ENCODE measurements at regions of chr20 and their contacts with region 1.

Region 1: DNA sequence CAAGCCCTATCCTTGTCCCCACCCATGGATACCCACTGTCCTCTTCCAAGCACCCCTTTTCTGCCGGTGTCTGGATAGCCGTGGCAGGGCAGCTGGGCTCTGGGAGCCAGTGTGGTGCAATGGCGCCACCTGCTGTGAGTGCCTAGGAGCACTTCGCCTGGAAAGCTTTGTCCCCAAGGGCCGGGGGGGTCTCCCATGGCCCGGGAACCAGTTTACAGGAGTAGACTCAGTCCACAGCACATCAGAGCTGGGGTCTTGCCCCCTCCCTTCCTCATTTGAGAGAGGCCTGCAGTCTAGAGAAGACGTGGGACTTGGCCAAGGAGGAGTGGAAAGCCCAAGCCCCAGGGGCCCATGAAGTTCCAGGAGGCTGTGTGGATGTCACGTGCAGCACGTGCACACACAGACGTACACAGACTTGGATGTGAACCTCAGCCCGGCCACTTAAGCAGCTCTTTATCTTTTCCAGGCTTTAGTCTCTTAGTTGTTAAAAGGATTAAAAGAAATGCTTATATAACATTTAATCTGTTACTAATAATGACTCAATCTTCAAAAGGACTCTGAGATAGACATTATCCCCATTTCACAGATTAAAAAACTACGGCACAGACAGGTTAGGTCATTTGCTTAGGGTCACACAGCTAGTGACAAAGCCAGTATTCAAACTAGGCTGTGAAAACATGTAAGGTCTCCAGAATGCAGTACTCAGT is 40.9 kb upstream of the CDH22 start:
- DNase-seq: peak; percentile 66 to 79
- ATAC-seq: peak; percentile 62 to 85 (median 80)
- H3K4me3 ChIP-seq: no peak overlapping the region
- H3K27ac ChIP-seq: no peak overlapping the region
- H3K4me1 ChIP-seq: no peaks in the 10 kb centered on the region
- H3K27me3 ChIP-seq: no peaks in the 10 kb centered on the region
- CTCF ChIP-seq: peak; percentile 85

Region 2: GRCh38 chr20:46273717-46274116 is 75.5 kb before region 1 on chr20:
- intact Hi-C with region 1: no loop called
- DNase-seq: no peak
- ATAC-seq: no peak
- H3K4me3 ChIP-seq: no peak overlapping the region
- H3K27ac ChIP-seq: no peak overlapping the region
- H3K4me1 ChIP-seq: no peaks in the 10 kb centered on the region
- H3K27me3 ChIP-seq: peaks cover 0 to 26% (median 6%) of the 10 kb centered on the region in 3 donors
- CTCF ChIP-seq: no peak

Region 3: GRCh38 chr20:46296526-46297250 is 52.5 kb before region 1 on chr20:
- intact Hi-C with region 1: no loop called
- DNase-seq: no peak
- ATAC-seq: no peak
- H3K4me3 ChIP-seq: no peak overlapping the region
- H3K27ac ChIP-seq: no peak overlapping the region
- H3K4me1 ChIP-seq: no peaks in the 10 kb centered on the region
- H3K27me3 ChIP-seq: peaks cover 0 to 62% (median 0%) of the 10 kb centered on the region in 3 donors
- CTCF ChIP-seq: no peak

Region 4: DNA sequence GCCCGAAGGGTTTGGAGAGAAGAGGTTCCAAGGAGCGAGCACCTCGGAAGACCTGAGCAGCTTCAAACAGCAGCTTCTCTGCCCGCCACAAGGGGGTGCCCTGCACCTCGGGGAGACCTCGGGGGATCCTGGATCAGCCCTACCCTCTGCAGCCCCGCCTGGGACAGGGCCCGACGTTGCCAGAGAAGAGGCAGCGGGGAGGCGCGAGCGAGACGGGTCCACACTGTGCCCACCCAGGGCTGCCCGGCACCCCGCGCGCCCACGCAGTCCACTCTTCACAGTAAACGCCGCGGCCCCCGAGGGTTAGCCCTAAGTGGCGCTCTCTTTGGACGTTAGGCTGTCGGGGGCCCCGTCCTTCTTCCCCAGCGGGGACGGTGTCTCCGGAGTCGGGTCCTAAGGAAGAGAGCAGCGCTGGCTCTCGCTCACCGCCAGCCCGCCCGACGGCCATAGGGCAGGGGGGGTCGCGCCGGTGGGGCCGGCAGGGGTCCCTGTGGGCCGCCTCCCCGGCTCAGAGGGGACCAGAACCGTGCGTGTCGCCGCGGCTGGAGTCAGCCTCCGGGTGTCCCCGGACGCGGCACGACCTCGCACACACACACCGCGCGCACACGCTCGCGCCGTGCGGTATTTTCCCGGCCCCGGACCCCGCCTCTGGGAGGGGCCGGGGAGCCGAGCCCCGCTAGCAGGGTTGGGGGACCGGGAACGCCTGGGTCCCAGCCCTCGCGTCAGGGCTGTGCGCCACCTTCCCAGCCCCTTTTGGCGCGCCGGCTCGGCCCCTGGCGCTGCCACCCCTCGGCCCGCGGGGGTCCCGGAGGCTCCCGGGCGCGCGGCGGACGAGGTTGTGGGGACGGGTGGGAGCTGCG is 41.8 kb before region 1 on chr20:
- intact Hi-C with region 1: loop called (anchors 1 to 2 kb)
- DNase-seq: peak; percentile 57 to 81
- ATAC-seq: peak; percentile 75 to 88 (median 81)
- H3K4me3 ChIP-seq: peak overlapping the region; percentile 63
- H3K27ac ChIP-seq: no peak overlapping the region
- H3K4me1 ChIP-seq: no peaks in the 10 kb centered on the region
- H3K27me3 ChIP-seq: peaks cover 0 to 92% (median 14%) of the 10 kb centered on the region in 3 donors
- CTCF ChIP-seq: peak; percentile 85